Mammary epithelial cell (primary cell): ENCODE measurements at regions of chr2 and their contacts with region 1.

Region 1: DNA sequence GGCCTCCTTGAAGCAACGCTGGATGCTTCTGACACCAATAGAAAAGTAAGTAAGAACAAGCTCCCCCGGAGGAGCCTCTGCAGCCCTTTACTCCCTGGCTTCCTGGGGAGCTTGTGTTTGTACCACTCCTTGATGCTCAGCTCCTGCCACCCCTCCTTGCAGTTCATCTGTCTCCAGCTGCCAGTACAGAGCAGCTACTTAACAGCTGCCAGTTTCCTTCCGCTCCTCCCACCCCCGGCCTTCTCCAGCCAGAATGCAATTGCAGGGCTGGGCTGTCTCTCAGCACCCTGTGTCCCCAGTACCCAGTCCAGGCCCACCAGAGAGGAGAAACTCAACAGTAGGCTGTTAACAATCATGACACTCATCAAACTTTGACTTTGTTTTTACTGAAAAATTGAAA is 109.4 kb downstream of the AOX1 start:
- DNase-seq: no peak
- H3K4me3 ChIP-seq: no peak overlapping the region
- H3K27ac ChIP-seq: no peak overlapping the region
- H3K4me1 ChIP-seq: no peaks in the 10 kb centered on the region
- H3K27me3 ChIP-seq: no peaks in the 10 kb centered on the region
- CTCF ChIP-seq: no peak

Region 2: GRCh38 chr2:200585730-200586643 is 109.2 kb before region 1 on chr2 and contains the start of gene AOX1:
- CTCF ChIA-PET with region 1: no interaction called
- dilution Hi-C with region 1: no loop called
- in situ Hi-C with region 1: loop called in 1 of 2 experiments (anchors 10 kb)
- intact Hi-C with region 1: no loop called
- DNase-seq: peak; percentile 30
- H3K4me3 ChIP-seq: peak within 1 kb of the TSS; percentile 48 to 54 (median 49)
- H3K27ac ChIP-seq: no peak within 1 kb of the TSS
- H3K4me1 ChIP-seq: peaks cover 9% of the 10 kb centered on the region
- H3K27me3 ChIP-seq: no peaks in the 10 kb centered on the region
- CTCF ChIP-seq: no peak
- total RNA-seq, gene AOX1: 54.9 to 75.3 TPM